Uterus (tissue), 4 donors: ENCODE measurements at regions of chr2 and their contacts with region 1.

Region 1: GRCh38 chr2:105744091-105744908 is 412 bp upstream of the NCK2 start:
- DNase-seq: peak; percentile 43 to 52
- H3K4me3 ChIP-seq: peak overlapping the region; percentile 60 to 78
- H3K27ac ChIP-seq: peak overlapping the region; percentile 92 to 94
- H3K4me1 ChIP-seq: peaks cover 0 to 8% of the 10 kb centered on the region in 2 donors
- H3K27me3 ChIP-seq: no peaks in the 10 kb centered on the region
- CTCF ChIP-seq: no peak
- POLR2A ChIP-seq: peak; percentile 18 to 52

Region 2: GRCh38 chr2:105571445-105571987 is 172.8 kb before region 1 on chr2:
- intact Hi-C with region 1: no loop called
- DNase-seq: no peak
- H3K4me3 ChIP-seq: no peak overlapping the region
- H3K27ac ChIP-seq: no peak overlapping the region
- H3K4me1 ChIP-seq: no peaks in the 10 kb centered on the region
- H3K27me3 ChIP-seq: no peaks in the 10 kb centered on the region
- CTCF ChIP-seq: no peak
- POLR2A ChIP-seq: no peak

Region 3: DNA sequence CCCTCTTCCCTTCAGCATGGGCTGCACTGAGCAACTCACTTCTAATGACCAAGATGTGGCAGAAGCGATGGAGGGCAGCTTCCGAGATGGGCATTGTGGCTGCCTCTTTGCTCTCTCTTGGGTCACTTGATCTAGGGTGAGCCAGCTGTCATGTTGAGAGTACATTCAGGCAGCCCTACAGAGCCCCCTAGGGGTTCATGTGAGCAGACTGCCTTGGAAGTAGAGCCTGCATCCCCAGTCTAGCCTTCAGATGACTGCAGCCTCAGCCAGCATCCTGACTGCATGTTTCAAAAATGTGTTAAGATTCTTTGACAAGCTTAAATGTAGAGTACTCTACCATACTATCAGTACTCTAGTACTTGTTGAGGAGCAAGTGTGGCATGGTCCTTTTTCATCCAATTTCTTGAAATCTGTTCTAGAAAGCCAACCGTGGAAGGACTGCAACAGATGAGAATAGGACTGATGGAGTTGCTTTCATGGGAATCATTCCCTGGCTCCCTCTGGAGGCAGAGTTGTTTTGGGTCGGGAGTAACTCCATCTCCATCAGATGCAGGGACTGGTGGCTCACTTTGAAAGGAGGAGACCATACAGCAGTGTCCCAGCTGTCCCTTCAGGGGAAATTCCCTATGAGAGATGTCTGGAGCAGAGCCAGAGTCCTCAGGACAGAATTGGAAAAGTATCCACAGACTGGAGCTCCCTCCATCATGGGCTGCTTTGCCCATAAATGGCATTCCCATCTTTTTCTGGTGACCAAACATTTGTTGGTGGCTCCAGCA is 144.5 kb after region 1 on chr2:
- intact Hi-C with region 1: no loop called
- DNase-seq: no peak
- H3K4me3 ChIP-seq: no peak overlapping the region
- H3K27ac ChIP-seq: no peak overlapping the region
- H3K4me1 ChIP-seq: peaks cover 3% of the 10 kb centered on the region in 2 donors
- H3K27me3 ChIP-seq: no peaks in the 10 kb centered on the region
- CTCF ChIP-seq: no peak
- POLR2A ChIP-seq: no peak

Region 4: GRCh38 chr2:106193977-106194778 is 449.9 kb after region 1 on chr2 and contains the start of gene UXS1:
- intact Hi-C with region 1: loop called (anchors 10 kb)
- DNase-seq: peak; percentile 98 to 99
- H3K4me3 ChIP-seq: peak within 1 kb of the TSS; percentile 80 to 92
- H3K27ac ChIP-seq: peak within 1 kb of the TSS; percentile 88
- H3K4me1 ChIP-seq: no peaks in the 10 kb centered on the region
- H3K27me3 ChIP-seq: no peaks in the 10 kb centered on the region
- CTCF ChIP-seq: peak in 1 of 4 experiments; percentile 5
- POLR2A ChIP-seq: peak; percentile 63 to 68
- total RNA-seq, gene UXS1: 26.2 to 103 (median 74.8) TPM